ENCODE measurements at regions of chr17 and their contacts with region 1.

Region 1: DNA sequence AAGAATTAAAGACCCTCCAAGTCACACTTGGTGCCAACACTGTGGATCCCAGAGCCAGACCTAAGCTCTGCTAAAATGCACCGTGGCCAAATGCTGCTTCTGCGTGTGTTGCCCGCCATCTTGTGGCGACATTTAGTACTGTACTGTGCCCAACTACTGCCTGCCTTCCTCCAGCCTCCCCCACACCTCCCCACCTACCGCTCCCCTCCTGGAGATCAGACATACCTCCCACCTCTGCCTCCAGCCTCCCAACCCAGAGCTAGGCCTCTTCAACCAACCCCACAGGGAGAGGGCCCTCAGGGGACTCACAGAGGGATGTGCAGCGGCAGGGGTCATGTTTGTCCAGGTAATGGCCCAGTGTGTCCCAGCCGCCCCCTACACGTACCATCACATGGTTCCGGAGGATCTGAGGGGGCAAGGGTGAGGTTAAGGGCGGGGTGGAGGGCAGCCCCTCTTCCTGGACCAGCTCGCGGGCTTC is 5.5 kb downstream of the GAS2L2 start:
- DNase-seq: peak; percentile 89
- H3K4me3 Mint-ChIP-seq: no peak overlapping the region
- H3K27ac Mint-ChIP-seq: no peak overlapping the region
- H3K4me1 Mint-ChIP-seq: peaks cover 15% of the 10 kb centered on the region
- H3K27me3 Mint-ChIP-seq: peaks cover 42% of the 10 kb centered on the region

Region 2: DNA sequence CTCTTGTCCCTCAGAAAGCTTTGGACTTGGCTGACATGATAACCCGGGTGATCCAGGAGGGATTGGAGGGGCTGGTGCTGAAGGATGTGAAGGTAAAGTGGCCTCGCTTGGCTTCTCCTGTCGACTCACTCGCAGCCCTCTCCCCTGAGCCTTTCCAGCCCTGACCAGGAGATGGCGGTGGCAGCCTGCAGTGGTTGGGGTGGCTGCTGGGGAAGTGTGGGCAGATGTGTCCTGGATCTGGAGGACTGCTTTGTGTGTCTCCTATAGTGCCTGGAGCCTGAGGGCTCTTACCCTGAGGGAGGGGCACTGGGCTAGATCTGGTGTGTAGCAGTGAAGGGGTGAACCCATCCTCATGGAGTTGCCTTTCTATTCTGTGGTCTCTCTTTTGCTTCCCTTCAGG is 749.4 kb before region 1 on chr17:
- CTCF ChIA-PET with region 1: no interaction called
- intact Hi-C with region 1: loop called (anchors 1 kb)
- DNase-seq: peak; percentile 88
- H3K4me3 Mint-ChIP-seq: no peak overlapping the region
- H3K27ac Mint-ChIP-seq: peak overlapping the region; percentile 83
- H3K4me1 Mint-ChIP-seq: peaks cover 6% of the 10 kb centered on the region
- H3K27me3 Mint-ChIP-seq: no peaks in the 10 kb centered on the region

Region 3: GRCh38 chr17:35170968-35171771 is 576.4 kb before region 1 on chr17:
- CTCF ChIA-PET with region 1: interaction called, 3 read pairs
- intact Hi-C with region 1: loop called (anchors 1 kb)
- DNase-seq: no peak
- H3K4me3 Mint-ChIP-seq: no peak overlapping the region
- H3K27ac Mint-ChIP-seq: peak overlapping the region; percentile 61
- H3K4me1 Mint-ChIP-seq: peaks cover 33% of the 10 kb centered on the region
- H3K27me3 Mint-ChIP-seq: no peaks in the 10 kb centered on the region

Region 4: DNA sequence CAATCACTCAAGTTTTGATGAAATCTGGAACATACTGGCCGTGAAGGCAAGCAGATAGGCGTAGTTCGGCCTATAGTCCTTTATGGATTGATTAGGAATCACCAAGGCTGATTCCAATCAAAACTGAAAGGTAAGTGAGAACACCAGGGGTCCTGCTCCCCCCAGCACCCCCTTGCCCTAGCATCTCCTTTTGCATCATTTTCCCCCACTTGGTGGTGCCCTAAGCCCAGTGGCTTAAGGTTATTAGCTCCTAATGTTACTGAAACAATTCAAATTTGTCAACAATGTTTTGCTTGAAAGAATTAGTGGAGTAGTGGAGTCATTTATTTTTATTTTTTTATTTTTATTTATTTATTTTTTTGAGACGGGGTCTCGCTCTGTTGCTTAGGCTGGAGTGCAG is 191.9 kb before region 1 on chr17:
- CTCF ChIA-PET with region 1: interaction called, 3 read pairs
- intact Hi-C with region 1: loop called (anchors 2 kb)
- DNase-seq: peak; percentile 39
- H3K4me3 Mint-ChIP-seq: no peak overlapping the region
- H3K27ac Mint-ChIP-seq: no peak overlapping the region
- H3K4me1 Mint-ChIP-seq: peaks cover 1% of the 10 kb centered on the region
- H3K27me3 Mint-ChIP-seq: no peaks in the 10 kb centered on the region

Region 5: DNA sequence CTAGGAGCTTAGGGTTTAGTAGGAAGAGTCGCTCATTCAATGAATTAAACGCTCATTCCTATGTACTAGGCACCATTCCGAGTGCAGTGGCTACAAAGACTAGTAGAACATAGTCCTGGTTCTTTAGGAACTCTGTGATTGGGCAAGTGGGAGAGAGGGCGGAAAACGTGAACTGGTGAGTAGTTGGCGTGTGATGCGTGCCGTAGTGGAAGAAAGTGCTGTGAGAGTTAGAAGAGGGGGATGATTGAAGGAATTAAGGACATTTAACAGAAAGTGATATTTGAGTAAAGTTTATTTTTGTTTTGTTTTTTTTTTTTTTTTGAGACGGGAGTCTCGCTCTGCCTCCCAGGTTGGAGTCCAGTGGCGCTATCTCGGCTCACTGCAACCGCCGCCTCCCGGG is 179.0 kb before region 1 on chr17:
- CTCF ChIA-PET with region 1: no interaction called
- intact Hi-C with region 1: no loop called
- DNase-seq: peak; percentile 54
- H3K4me3 Mint-ChIP-seq: peak overlapping the region; percentile 82
- H3K27ac Mint-ChIP-seq: peak overlapping the region; percentile 86
- H3K4me1 Mint-ChIP-seq: peaks cover 29% of the 10 kb centered on the region
- H3K27me3 Mint-ChIP-seq: no peaks in the 10 kb centered on the region

Region 6: GRCh38 chr17:35612924-35613521 is 134.6 kb before region 1 on chr17:
- CTCF ChIA-PET with region 1: interaction called, 53 read pairs
- intact Hi-C with region 1: loop called (anchors 1 kb)
- DNase-seq: peak; percentile 72
- H3K4me3 Mint-ChIP-seq: no peak overlapping the region
- H3K27ac Mint-ChIP-seq: no peak overlapping the region
- H3K4me1 Mint-ChIP-seq: no peaks in the 10 kb centered on the region
- H3K27me3 Mint-ChIP-seq: no peaks in the 10 kb centered on the region

Region 7: DNA sequence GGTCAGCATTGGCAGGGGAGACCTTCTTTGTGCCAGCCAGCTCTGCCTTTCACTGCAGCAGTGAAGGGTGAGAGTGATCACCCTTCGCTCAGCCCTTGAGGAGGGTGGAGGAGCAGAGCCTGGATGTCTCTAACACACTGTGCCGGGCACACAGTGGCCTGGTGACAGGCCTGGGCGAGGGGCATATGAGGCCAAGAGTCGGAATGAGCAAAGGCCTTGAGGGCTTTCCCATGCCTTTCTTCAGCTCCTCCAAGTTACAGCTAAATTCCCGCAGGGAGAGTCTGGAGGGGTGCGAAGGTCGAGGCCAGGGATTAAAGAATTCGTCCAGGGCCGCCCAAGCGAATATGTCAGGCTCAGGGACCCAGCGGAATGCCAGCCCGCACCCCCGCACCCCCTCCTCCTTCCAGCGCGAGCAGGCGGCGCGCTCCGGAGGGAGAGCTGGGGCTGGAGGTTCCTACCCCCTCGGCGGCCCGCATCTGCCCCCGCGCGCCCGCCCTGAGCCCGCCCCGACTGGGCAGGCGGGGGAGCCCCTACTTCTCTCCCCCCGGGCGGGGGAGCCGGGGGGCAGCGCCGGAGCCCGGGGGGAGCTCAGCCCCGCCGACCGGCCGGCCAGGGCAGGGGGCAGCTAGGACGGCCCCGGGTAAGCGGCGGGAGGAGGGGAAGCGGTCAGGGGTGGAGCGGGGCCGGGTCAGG is 16.2 kb before region 1 on chr17 and contains the start of gene RASL10B:
- CTCF ChIA-PET with region 1: interaction called, 16 read pairs
- intact Hi-C with region 1: no loop called
- DNase-seq: peak; percentile 64
- H3K4me3 Mint-ChIP-seq: peak within 1 kb of the TSS; percentile 74
- H3K27ac Mint-ChIP-seq: peak within 1 kb of the TSS; percentile 53
- H3K4me1 Mint-ChIP-seq: peaks cover 16% of the 10 kb centered on the region
- H3K27me3 Mint-ChIP-seq: no peaks in the 10 kb centered on the region
- total RNA-seq, gene RASL10B: 0.96 to 1.1 TPM

Region 8: DNA sequence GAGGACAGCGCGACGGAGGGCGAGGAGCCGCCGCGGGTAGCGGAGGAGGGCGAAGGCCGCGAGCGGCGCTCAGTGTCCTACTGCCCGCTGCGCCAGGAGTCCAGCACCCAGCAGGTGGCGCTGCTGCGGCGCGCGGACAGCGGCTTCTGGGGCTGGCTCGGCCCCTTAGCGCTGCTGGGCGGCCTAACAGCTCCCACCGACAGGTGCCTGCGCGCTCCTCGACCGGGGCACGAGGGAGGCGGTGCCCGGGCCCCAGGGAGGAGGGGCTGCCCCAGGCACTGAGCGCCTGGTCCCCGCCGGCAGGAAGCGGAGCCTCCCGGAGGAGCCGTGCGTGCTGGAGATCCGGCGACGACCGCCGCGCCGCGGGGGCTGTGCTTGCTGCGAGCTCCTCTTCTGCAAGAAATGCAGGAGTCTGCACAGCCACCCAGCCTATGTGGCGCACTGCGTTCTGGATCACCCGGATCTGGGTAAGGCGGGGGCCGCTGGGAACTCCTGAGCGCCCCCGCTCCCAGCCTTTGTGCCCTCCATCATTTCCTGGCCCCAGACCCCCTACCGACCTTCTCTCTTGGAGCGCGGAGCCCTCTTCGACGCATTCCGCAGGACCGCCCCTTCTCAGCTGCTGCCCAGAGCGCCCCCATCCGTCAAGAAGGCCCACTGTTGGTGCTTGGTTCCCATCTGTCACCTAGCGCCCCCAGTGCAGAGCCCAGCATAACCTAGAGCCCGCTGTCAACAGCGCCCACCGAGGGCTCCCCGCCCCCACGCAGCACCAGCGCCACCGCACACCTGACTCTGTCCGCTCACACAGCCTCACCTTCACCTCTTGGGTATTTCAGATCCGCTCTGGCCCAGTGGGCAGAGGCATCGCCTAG is 16.8 kb after region 1 on chr17:
- CTCF ChIA-PET with region 1: interaction called, 11 read pairs
- intact Hi-C with region 1: no loop called
- DNase-seq: peak; percentile 84
- H3K4me3 Mint-ChIP-seq: peak overlapping the region; percentile 79
- H3K27ac Mint-ChIP-seq: no peak overlapping the region
- H3K4me1 Mint-ChIP-seq: peaks cover 8% of the 10 kb centered on the region
- H3K27me3 Mint-ChIP-seq: no peaks in the 10 kb centered on the region

Region 9: GRCh38 chr17:36152636-36153120 is 405.1 kb after region 1 on chr17:
- CTCF ChIA-PET with region 1: no interaction called
- intact Hi-C with region 1: no loop called
- DNase-seq: no peak
- H3K4me3 Mint-ChIP-seq: no peak overlapping the region
- H3K27ac Mint-ChIP-seq: no peak overlapping the region
- H3K4me1 Mint-ChIP-seq: peaks cover 3% of the 10 kb centered on the region
- H3K27me3 Mint-ChIP-seq: peaks cover 29% of the 10 kb centered on the region